Posterior cingulate gyrus (tissue), 11 donors: ENCODE measurements at regions of chr13 and their contacts with region 1.

Region 1: DNA sequence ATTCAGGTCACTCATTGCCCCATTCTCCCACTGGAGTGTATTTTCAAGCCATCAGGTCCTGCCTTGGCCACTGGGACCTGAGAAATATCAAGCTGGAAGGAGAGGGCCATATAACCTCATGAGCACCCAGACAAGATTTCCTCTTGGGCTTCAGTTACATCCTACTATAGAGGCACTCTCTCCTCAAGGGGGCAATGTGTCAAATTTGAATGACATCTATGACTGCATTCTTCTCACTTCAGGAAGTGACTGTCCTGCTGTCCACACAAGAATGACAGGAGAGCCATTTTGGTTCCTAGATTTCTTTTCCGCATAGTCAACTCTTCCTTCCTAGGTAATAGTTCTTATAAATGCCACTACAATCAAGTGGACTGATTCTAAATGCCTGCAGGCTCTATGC is 416.2 kb downstream of the DIAPH3 start:
- DNase-seq: no peak

Region 2: GRCh38 chr13:59700281-59700680 is 47.2 kb before region 1 on chr13:
- intact Hi-C with region 1: loop called (anchors 1 kb)
- DNase-seq: no peak